Dorsolateral prefrontal cortex (tissue), 120 donors: ENCODE measurements at regions of chr2 and their contacts with region 1.

Region 1: DNA sequence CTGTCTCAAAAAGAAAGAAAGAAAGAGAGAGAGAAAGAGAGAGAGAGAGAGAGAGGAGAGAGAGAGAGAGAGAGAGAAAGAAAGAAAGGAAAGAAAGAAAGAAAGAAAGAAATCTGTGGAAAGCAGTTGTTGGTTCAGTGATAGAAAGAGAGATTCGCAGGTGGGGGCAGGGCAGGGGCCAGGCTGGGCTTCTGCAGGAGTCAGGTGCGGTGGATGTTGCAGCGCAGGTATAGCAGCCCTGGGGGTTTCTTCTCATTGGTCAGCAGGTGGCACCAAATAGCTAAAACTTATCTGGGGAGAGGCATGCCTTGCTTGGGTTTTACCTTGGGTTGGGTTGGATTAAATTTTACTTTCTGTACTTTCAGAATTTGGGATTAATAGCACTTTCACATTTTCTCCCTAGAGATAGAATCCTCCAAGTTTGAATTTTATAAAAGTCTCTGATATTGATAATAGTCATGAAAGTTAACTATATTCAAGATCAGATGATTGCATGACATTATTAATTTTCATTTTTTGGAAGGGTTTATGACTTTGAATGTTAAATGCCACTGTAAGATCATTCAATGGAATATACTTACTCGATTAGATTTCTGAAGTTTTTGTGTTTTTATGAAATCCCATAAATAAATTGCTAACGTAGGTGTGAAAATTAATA is 66.6 kb downstream of the SPTBN1 start:
- DNase-seq: peak in 1 of 10 donors; percentile 44
- H3K4me3 ChIP-seq: no peak overlapping the region
- H3K27ac ChIP-seq: peak overlapping the region in 15 of 59 donors; percentile 3 to 69 (median 45)
- H3K27me3 ChIP-seq: no peaks in the 10 kb centered on the region
- CTCF ChIP-seq: peak; percentile 38 to 79 (median 66)

Region 2: DNA sequence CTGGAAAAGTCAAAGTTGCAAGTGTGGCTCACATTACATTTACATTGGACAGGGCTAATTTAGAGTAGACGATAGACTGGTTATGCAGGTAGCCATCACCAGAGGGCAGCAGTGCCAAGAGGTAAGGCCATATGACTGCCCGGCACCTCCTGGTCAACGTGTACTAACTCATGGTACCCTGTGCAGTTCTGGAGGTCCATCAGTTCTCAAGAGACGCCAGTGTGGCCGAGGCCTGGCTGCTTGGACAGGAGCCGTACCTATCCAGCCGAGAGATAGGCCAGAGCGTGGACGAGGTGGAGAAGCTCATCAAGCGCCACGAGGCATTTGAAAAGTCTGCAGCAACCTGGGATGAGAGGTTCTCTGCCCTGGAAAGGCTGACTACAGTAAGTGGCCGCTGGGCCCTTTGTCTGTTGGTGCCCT is 134.9 kb after region 1 on chr2:
- intact Hi-C with region 1: loop called (anchors 1 to 5 kb)
- DNase-seq: peak in 3 of 10 donors; percentile 58 to 66 (median 61)
- H3K4me3 ChIP-seq: no peak overlapping the region
- H3K27ac ChIP-seq: peak overlapping the region in 57 of 59 donors; percentile 18 to 90 (median 78)
- H3K27me3 ChIP-seq: no peaks in the 10 kb centered on the region
- CTCF ChIP-seq: peak in 55 of 56 donors; percentile 29 to 71 (median 55)